Lower leg skin (tissue), 4 donors: ENCODE measurements at regions of chr7 and their contacts with region 1.

Region 1: DNA sequence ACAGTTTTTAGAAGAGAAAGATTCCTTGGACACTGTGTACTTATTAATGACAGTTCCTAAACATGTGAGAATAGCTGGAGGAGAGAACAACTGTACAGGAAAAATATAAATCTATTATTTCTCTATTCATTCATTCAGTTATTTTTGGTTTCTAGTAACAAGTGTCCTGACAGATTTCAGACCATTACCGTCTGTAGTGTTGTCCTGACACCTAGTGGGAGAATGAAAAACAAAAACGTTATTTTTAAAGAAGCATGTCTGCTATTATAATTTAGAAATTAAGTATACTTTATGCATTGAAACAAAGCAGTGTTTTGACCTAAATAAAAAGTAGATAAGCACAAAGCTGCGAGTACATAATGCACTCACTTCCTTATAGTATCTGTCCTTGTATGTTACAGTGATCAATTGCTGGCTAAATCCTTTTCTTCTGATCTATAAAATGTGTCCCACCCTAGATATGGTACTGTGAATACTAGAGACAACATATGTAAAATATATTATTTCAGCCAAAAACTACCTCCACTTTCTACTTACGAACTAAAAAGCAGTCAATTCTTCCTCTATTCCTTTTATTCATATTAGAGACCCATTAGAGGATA is 575.6 kb downstream of the ARL4A start:
- DNase-seq: no peak
- H3K4me3 ChIP-seq: no peak overlapping the region
- CTCF ChIP-seq: no peak
- POLR2A ChIP-seq: no peak

Region 2: DNA sequence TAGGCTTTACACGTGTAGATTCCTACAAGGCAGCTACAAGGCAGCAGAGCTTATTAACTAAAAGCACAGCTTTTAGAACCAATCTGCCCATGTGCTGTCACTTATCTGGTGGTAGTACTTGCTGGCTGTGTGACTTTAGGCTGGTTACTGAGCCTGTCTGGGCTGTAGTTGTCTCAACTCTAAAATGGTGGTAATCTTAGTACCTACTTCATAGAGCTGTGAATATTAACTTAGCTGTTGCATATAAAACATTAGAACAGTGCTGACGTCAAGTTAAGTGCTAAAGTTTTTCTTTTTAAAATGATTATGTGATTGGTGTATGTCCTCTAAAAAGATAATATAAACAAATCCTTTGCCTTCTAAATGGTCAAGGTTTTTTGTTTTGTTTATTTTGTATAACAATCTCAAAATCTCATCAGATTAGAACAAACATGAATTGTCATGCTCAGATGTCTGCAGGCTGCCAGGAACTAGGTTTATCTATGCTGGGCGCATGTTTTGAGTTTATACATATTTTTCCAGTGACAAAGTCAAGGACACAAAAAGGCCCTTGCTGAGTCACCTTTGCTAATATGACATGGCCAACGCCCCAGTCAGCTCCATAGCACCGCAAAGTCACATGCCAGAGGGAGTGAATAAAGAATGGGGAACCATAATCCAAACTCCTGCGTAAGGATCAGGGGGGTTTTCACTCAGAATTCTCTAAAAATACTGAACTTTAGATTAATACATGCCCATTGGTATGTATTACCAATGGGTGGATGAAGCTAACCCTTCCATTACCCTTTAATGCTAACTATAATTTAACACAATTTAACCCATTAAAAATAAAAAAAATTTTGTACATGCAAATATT is 615.4 kb before region 1 on chr7:
- intact Hi-C with region 1: loop called (anchors 10 kb)
- DNase-seq: no peak
- H3K4me3 ChIP-seq: no peak overlapping the region
- CTCF ChIP-seq: no peak
- POLR2A ChIP-seq: no peak

Region 3: DNA sequence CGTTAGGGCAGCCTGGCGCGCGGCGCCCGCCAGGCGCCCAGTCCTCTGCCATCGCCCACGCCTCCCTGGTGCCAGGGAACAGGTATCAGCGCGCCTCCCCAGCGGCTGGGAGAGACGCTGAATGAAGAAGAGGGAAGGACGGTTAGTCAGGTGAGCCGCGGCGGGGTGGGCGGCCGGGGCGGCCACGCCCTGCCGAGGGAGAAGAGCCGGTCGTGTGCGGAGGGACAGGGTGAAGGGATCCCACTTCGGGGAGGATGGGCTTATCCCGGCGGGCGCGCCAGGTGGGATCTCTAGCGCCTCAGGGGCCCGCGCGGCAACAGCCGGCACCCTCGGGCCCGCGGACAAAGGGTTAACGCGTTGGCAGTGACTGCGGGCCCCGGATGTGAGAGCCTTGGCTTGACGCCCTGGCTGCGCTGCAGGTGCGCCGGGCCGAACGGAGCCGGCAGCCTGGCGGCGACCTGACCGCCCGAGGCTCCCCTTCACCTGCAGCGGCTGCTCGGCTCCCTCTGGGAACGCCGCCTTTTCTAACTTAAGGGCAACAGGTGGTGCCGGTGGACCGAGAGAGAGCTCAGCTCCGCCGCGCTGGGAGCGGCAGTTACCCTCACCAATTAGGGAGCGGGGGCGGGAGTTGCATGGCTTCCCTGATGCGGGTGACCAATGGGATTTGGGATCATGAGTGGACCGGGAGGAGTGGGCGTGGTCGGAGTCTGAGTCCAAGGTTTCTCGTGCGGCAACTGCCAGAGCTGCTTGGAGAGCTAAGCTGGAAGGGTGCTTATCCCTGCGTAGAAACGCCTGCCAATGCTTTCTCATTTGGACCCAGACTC is 575.9 kb before region 1 on chr7 and contains the start of gene ARL4A:
- intact Hi-C with region 1: loop called (anchors 5 kb)
- DNase-seq: peak; percentile 100
- H3K4me3 ChIP-seq: peak within 1 kb of the TSS; percentile 71
- CTCF ChIP-seq: no peak
- POLR2A ChIP-seq: no peak
- total RNA-seq, gene ARL4A: 94.9 to 253 (median 143) TPM